HEK293 (cell line): ENCODE measurements at regions of chr6 and their contacts with region 1.

Region 1: DNA sequence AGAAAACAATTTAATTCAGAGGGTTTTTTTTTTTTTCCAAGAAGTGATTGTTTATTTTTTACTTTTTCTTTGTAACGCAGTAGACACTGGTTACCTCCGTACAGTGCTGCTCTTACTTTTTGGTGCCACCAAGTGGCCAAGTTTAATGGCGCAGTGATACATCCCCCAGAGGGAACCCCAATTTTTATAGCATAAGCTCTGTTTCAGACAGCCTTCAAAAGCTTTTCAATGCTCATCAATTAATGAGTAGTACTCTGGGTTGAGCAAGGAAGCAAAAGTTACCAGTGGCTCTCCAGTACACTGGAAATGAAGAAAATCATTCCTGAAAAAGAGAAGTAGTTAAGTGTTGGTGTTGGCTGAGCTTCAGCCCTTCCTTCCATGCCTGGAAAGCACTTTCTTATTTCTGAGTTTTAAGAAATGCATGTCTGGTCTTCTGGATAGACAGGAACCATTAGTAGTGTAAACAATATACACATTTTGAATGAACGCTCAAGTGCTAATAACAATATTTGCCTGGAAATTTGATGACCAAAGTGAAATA is 129.1 kb upstream of the SMLR1 start:
- H3K4me3 ChIP-seq: no peak overlapping the region
- H3K27ac ChIP-seq: no peak overlapping the region
- H3K4me1 ChIP-seq: no peaks in the 10 kb centered on the region
- CTCF ChIP-seq: peak; percentile 28; the same call in 1 of the 2 replicates

Region 2: DNA sequence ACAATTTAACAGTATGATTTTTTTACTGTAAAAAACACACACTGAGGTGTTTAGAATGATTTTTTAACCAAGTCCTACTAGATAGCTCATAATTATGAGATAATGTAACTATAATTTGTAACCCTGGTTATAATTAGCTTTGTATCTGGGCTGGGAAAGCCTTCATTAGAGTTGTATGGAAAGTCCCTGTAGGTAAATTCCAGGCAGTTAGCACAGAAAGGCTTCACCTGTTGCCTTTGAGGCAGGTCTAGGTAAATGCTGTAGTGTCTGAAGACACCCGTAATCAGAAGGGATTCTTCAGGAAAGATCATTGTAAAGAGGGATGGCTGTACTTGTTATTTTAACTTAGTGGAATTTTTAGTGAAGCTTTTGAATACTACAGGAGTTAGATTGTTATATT is 330.3 kb before region 1 on chr6:
- CTCF ChIA-PET with region 1: interaction called, 12 read pairs
- POLR2A ChIA-PET with region 1: no interaction called
- H3K4me3 ChIP-seq: no peak overlapping the region
- H3K27ac ChIP-seq: no peak overlapping the region
- H3K4me1 ChIP-seq: 0 out of 2 replicates have a peak, but pooled peaks cover 4% of the 10 kb centered on the region
- CTCF ChIP-seq: no peak

Region 3: GRCh38 chr6:130560231-130560630 is 137.8 kb before region 1 on chr6:
- CTCF ChIA-PET with region 1: no interaction called
- POLR2A ChIA-PET with region 1: interaction called, 11 read pairs
- H3K4me3 ChIP-seq: no peak overlapping the region
- H3K27ac ChIP-seq: no peak overlapping the region
- H3K4me1 ChIP-seq: peaks cover 21% of the 10 kb centered on the region
- CTCF ChIP-seq: no peak

Region 4: GRCh38 chr6:130815200-130816071 is 117.4 kb after region 1 on chr6:
- CTCF ChIA-PET with region 1: no interaction called
- POLR2A ChIA-PET with region 1: no interaction called
- H3K4me3 ChIP-seq: no peak overlapping the region
- H3K27ac ChIP-seq: no peak overlapping the region
- H3K4me1 ChIP-seq: no peaks in the 10 kb centered on the region
- CTCF ChIP-seq: no peak